Ovary (tissue), 10 donors: ENCODE measurements at regions of chr10 and their contacts with region 1.

Region 1: DNA sequence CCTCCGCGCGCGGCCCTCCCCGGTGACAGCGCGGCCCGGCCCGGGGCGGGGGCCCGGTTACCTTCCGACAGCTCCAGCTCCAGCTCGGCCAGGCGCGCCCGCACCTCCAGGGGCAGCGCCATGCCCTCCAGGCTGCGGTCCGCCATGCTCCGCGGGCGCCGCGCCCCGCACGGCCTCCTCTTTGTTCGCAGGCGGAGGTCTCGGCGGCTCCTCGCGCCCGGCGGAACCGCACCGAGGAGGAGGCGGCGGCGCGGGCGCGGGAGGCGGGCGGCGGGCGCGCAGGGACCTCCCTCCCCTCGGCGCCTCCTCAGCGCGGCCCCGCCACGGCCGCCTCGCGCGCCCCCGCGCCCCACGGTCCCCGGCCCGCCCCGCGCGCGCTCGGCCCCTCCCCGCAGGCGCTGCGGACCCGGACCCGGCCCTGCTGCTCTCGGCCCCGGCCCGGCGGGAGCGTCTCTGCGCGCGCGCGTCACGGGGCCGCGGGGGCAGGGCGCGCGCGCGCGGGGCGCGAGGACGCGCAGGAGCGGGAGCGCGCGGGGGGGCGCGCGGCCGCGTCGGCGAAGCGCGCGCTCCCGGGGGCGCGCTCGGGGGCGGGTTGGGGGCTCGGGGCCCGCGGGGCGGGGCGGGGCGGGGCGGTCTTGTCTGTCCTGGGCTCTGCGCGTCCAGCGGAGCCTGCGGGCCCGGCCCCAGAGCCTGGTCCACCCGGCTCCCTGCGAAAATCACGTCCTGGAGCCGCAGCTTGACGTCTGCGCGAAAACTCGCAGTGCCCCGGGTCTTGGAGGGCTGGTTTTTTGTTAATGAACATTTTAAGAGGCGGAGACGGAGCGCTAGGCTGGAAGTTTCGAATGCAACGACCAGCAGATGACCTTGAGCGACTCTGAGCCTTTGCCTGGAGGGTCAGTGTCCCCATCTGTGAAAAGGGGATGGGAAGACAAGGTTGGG is at the start of gene DIP2C:
- DNase-seq: peak; percentile 78 to 89 (median 83)
- H3K4me3 ChIP-seq: peak within 1 kb of the TSS; percentile 76
- H3K27ac ChIP-seq: peak within 1 kb of the TSS; percentile 75 to 87
- H3K4me1 ChIP-seq: peaks cover 12% of the 10 kb centered on the region
- H3K27me3 ChIP-seq: no peaks in the 10 kb centered on the region
- CTCF ChIP-seq: no peak
- EP300 ChIP-seq: no peak
- POLR2A ChIP-seq: peak; percentile 24
- total RNA-seq, gene DIP2C: 13.9 to 29.4 (median 23.9) TPM

Region 2: DNA sequence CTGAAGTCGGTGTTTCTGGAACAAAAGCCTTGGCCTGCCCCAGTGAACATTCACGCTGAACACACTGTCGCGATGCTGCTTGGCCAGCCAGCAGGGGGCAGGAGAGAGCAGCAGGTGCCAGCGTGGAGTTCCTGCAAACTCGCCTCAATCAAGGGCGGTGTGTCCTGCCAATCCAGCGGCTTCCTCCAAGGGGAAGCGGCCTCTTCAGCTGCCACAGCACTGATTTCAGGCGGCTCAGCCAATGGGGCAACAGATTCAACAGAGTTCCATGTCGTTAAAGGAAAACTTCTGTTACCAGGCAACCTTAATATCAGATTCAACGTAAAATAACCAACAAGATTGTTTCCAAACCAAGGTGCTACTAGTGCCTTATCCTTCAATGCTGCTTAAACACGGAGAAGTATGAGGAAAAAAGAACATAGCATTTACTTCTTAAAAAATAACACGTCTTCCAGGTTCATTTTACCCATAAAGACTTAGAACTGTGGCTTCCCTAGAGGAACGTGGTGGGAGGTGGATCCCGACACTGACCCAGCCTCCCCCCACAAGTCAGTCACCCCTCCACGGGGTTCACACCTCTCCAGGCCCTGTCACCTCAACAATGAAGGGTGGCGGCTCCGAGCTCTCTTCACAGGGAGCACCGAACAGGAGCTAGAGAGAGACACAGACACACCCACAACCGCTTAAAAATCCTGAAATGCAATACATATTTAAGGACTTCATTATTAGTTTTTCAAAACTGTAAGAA is 178.4 kb before region 1 on chr10:
- intact Hi-C with region 1: loop called in 1 of 4 experiments (anchors 5 kb)
- DNase-seq: peak; percentile 88 to 95 (median 92)
- H3K4me3 ChIP-seq: no peak overlapping the region
- H3K27ac ChIP-seq: no peak overlapping the region
- H3K4me1 ChIP-seq: peaks cover 4% of the 10 kb centered on the region
- H3K27me3 ChIP-seq: no peaks in the 10 kb centered on the region
- CTCF ChIP-seq: peak; percentile 81 to 94 (median 94)
- EP300 ChIP-seq: no peak
- POLR2A ChIP-seq: no peak

Region 3: GRCh38 chr10:520406-520795 is 169.3 kb before region 1 on chr10:
- intact Hi-C with region 1: loop called in 2 of 4 experiments (anchors 10 kb)
- DNase-seq: peak in 4 of 5 donors; percentile 54 to 65 (median 58)
- H3K4me3 ChIP-seq: no peak overlapping the region
- H3K27ac ChIP-seq: no peak overlapping the region
- H3K4me1 ChIP-seq: peaks cover 9% of the 10 kb centered on the region
- H3K27me3 ChIP-seq: no peaks in the 10 kb centered on the region
- CTCF ChIP-seq: no peak
- EP300 ChIP-seq: no peak
- POLR2A ChIP-seq: no peak

Region 4: GRCh38 chr10:538895-539294 is 150.8 kb before region 1 on chr10:
- intact Hi-C with region 1: loop called in 1 of 4 experiments (anchors 10 kb)
- DNase-seq: no peak
- H3K4me3 ChIP-seq: no peak overlapping the region
- H3K27ac ChIP-seq: no peak overlapping the region
- H3K4me1 ChIP-seq: peaks cover 8% of the 10 kb centered on the region
- H3K27me3 ChIP-seq: no peaks in the 10 kb centered on the region
- CTCF ChIP-seq: no peak
- EP300 ChIP-seq: no peak
- POLR2A ChIP-seq: no peak

Region 5: DNA sequence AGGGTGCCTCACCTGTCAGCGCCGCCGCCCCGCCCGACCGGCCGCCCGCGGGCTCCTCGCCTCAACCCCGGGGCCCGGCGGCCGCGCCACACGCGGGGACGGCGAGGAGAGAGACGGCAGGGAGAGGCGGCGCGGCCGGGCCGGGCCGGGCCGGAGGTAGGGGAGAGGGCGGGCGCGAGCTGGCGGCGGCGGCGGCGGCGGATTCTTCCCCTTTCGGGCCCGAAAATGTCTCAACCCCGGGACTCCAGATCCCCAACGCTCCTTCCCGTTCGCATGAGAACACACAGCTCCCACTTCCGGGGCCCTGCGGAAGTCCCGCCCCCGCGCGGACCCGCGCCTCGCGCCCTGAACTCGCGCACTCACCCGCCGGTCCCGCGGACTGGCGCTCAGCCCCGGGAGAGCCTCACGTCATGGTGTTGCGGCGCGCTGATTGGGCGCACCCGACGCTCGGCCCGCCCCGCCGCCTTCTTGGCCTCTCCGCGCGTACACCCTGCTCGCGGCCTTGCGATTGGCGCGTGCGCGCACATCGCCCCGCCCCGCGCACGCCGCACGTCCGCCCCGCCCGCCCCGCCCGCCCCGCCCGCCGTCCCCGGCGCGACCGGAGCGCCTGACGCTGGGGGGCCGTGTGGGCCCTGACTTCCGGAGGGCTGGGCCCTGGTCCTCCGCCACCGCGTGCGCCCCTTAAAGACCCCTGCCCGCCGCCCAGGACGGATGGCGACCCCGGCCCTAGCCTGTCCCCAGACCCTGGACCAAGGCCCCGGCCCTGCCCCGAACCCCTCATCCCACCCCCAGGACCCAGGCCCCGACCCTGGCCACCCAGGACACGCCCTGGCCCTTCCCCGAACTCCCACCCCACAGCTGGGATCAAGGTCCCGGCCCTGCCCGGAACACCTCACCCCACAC is 242.0 kb after region 1 on chr10 and contains the start of gene LARP4B:
- intact Hi-C with region 1: loop called in 1 of 4 experiments (anchors 5 kb)
- DNase-seq: peak; percentile 95 to 98 (median 97)
- H3K4me3 ChIP-seq: peak within 1 kb of the TSS; percentile 85
- H3K27ac ChIP-seq: peak within 1 kb of the TSS; percentile 95 to 96
- H3K4me1 ChIP-seq: peaks cover 9% of the 10 kb centered on the region
- H3K27me3 ChIP-seq: no peaks in the 10 kb centered on the region
- CTCF ChIP-seq: no peak
- EP300 ChIP-seq: peak; percentile 32
- POLR2A ChIP-seq: peak; percentile 36
- total RNA-seq, gene LARP4B: 32.9 to 77.8 (median 56.2) TPM

Region 6: DNA sequence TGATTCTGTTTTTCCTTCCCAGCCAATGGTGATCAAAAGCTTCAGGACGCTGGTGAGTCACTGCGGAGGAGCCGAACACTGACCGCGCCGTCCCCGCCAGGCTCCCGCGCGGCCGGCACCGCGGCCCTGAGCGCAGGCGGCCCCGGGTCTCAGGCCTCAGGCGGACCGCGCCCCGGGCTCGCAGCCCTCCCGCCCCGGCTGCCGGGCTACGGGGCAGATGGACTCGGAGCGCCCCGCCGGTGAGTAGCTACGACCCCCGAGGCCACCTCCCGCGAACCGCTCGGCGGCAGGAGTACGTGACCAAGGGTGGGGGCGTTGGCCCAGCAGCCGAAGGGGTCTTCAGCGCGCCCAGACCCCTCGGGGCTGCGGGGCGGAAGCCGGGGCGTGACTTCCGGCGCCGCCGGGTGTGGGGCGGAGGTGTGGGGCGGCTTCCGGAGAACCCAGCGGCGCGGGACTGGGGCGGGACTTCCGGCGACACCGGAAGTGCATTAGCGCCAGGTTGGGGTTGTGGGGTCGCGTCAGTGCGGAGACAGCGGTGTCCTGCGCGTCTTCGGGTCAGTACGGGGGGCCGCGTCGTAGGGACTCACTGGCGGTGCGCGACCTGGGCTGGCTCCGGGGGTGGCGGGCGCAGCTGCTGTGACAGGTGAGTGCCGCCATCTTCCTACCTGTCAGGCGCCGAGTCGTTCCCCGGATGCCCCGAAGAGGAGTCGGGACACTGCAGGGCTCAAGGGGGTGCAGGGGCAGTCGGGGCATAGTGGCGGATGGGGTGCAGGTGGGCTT is 366.8 kb after region 1 on chr10 and contains the start of gene WDR37:
- intact Hi-C with region 1: loop called in 1 of 4 experiments (anchors 10 kb)
- DNase-seq: peak; percentile 83 to 93 (median 89)
- H3K4me3 ChIP-seq: peak within 1 kb of the TSS; percentile 69
- H3K27ac ChIP-seq: peak within 1 kb of the TSS; percentile 92 to 93
- H3K4me1 ChIP-seq: peaks cover 9% of the 10 kb centered on the region
- H3K27me3 ChIP-seq: no peaks in the 10 kb centered on the region
- CTCF ChIP-seq: no peak
- EP300 ChIP-seq: no peak
- POLR2A ChIP-seq: peak; percentile 66
- total RNA-seq, gene WDR37: 7.6 to 20.0 (median 15.6) TPM

Region 7: DNA sequence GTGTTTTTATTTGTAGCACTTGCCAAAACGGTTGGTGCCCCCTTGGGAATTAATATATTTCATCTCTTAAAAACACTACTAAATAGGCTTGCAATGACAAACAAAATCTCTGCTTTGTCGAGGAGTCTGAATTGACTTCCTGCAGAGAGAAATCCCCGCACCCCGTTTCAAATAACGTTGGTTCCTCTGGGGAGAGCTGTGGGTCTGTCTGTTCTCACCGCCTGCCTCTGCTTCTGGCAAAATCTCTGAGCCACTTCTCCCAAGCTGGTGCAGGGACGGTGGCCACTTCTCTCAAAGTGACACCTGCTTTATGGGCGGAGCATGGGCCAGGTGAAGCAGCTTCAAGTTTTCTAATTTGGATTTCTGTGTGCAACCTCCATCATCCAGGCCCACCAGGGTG is 1233.9 kb after region 1 on chr10:
- intact Hi-C with region 1: no loop called
- DNase-seq: no peak
- H3K4me3 ChIP-seq: no peak overlapping the region
- H3K27ac ChIP-seq: no peak overlapping the region
- H3K4me1 ChIP-seq: no peaks in the 10 kb centered on the region
- H3K27me3 ChIP-seq: no peaks in the 10 kb centered on the region
- CTCF ChIP-seq: no peak
- EP300 ChIP-seq: no peak
- POLR2A ChIP-seq: no peak